Breast epithelium (tissue), 4 donors: ENCODE measurements at regions of chr16 and their contacts with region 1.

Region 1: GRCh38 chr16:69741919-69742904 is 12.5 kb downstream of the NOB1 start:
- DNase-seq: peak; percentile 86 to 90
- H3K4me3 ChIP-seq: peak overlapping the region in 1 of 3 donors; percentile 0
- H3K27ac ChIP-seq: peak overlapping the region; percentile 52 to 53
- H3K4me1 ChIP-seq: no peaks in the 10 kb centered on the region
- H3K27me3 ChIP-seq: no peaks in the 10 kb centered on the region
- CTCF ChIP-seq: peak in 1 of 3 donors; percentile 20
- POLR2A ChIP-seq: no peak

Region 2: GRCh38 chr16:69563605-69564580 is 178.3 kb before region 1 on chr16:
- intact Hi-C with region 1: no loop called
- DNase-seq: no peak
- H3K4me3 ChIP-seq: peak overlapping the region in 2 of 3 donors; percentile 89 to 99
- H3K27ac ChIP-seq: peak overlapping the region; percentile 45 to 100
- H3K4me1 ChIP-seq: peaks cover 0 to 4% of the 10 kb centered on the region in 2 donors
- H3K27me3 ChIP-seq: no peaks in the 10 kb centered on the region
- CTCF ChIP-seq: no peak
- POLR2A ChIP-seq: no peak

Region 3: DNA sequence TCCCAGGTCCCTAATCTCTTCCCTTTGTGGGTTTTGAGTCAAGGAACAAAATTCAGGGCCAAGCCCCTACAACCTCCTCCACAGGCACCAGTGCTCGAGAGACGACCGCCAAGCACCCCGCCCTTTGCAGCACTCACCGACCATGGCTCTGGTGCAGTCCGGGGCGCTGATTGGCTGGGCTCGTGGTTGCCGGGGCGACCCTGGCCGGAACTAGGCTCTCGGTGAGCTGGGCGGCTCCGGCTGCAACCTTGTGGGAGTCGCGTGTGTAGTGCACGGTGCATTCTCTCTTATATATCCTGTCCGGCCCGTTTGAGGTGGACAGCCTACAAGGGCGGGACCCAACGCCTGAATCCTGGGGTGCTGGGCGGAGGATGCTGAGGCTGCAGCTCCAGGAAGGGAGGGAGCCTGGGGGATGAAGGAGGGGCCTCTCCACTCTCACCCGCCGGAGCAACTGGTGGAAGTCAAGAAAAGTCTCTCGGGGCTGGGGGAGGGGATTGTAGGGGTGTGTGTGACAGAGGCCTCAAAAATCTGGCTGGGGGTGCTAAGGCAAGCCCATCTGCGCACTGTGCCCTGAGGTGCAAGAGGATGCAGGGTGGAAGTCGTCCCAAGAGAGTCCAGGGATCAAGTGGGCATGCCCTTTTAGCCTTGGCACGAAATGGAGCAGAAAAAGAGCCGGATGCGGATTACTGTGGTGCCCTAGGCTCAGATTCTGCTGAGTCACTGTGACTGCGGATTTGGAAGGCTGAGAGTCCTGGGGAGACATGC is 15.7 kb before region 1 on chr16 and contains the start of gene NQO1:
- intact Hi-C with region 1: loop called (anchors 2 kb)
- DNase-seq: peak; percentile 90 to 97
- H3K4me3 ChIP-seq: peak within 1 kb of the TSS; percentile 50 to 75 (median 60)
- H3K27ac ChIP-seq: peak within 1 kb of the TSS; percentile 86 to 89
- H3K4me1 ChIP-seq: peaks cover 0 to 6% of the 10 kb centered on the region in 2 donors
- H3K27me3 ChIP-seq: no peaks in the 10 kb centered on the region
- CTCF ChIP-seq: no peak
- POLR2A ChIP-seq: peak; percentile 38
- total RNA-seq, gene NQO1: 116 to 188 (median 133) TPM